PC-9 (cell line): ENCODE measurements at regions of chr16 and their contacts with region 1.

Region 1: GRCh38 chr16:50806099-50807062 is 64.5 kb downstream of the CYLD start:
- DNase-seq: peak; percentile 70 to 78
- H3K4me3 ChIP-seq: peak overlapping the region; percentile 37; the same call in 1 of the 2 replicates
- H3K27ac ChIP-seq: no peak overlapping the region
- H3K4me1 ChIP-seq: no peaks in the 10 kb centered on the region
- H3K27me3 ChIP-seq: peaks cover 10% of the 10 kb centered on the region; the same call in 1 of the 2 replicates
- CTCF ChIP-seq: peak; percentile 93

Region 2: DNA sequence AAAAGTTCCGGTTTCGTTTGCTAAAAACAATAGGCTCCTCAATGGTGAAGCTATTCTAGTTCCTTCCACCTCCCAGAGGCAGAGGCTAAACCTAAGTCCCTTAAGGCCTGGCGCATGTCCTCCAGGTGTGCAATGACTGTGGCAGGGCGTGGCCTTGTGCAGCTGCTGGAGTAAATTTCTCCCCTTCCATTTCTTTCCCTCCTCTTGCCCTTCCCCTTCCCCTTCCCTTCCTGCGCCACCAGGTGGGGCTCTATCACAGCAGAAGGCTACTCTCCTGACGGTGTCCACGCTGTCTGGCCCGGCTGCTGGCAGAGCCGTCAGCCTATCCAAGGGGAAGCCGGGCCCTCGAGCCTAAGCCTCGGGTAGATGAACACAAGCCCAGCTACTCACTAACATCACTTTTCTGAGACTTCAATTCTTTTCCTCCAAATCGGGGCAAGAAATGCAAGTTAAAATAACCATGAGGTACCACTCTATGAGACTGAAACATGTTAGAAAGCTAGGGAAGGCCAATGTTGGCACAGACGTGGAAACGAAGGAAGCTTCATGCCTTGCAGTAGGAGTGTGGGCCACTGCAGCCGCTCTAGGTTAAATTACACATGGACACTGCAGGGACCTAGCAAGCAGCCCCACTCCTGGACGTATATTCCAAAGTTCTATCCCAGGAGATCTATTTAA is 1398.4 kb before region 1 on chr16:
- CTCF ChIA-PET with region 1: no interaction called
- POLR2A ChIA-PET with region 1: no interaction called
- intact Hi-C with region 1: loop called (anchors 1 kb)
- DNase-seq: peak; percentile 46 to 59
- H3K4me3 ChIP-seq: no peak overlapping the region
- H3K27ac ChIP-seq: no peak overlapping the region
- H3K4me1 ChIP-seq: no peaks in the 10 kb centered on the region
- H3K27me3 ChIP-seq: no peaks in the 10 kb centered on the region
- CTCF ChIP-seq: peak; percentile 70

Region 3: GRCh38 chr16:50210266-50211038 is 595.9 kb before region 1 on chr16:
- CTCF ChIA-PET with region 1: interaction called, 6 read pairs
- POLR2A ChIA-PET with region 1: no interaction called
- intact Hi-C with region 1: loop called (anchors 1 kb)
- DNase-seq: peak; percentile 53 to 55
- H3K4me3 ChIP-seq: no peak overlapping the region
- H3K27ac ChIP-seq: no peak overlapping the region
- H3K4me1 ChIP-seq: no peaks in the 10 kb centered on the region
- H3K27me3 ChIP-seq: no peaks in the 10 kb centered on the region
- CTCF ChIP-seq: peak; percentile 68

Region 4: GRCh38 chr16:50360779-50361178 is 445.6 kb before region 1 on chr16:
- CTCF ChIA-PET with region 1: no interaction called
- POLR2A ChIA-PET with region 1: no interaction called
- intact Hi-C with region 1: loop called (anchors 1 kb)
- DNase-seq: no peak
- H3K4me3 ChIP-seq: no peak overlapping the region
- H3K27ac ChIP-seq: no peak overlapping the region
- H3K4me1 ChIP-seq: no peaks in the 10 kb centered on the region
- H3K27me3 ChIP-seq: no peaks in the 10 kb centered on the region
- CTCF ChIP-seq: no peak

Region 5: GRCh38 chr16:50407351-50407750 is 399.0 kb before region 1 on chr16:
- CTCF ChIA-PET with region 1: interaction called, 14 read pairs
- POLR2A ChIA-PET with region 1: no interaction called
- intact Hi-C with region 1: no loop called
- DNase-seq: no peak
- H3K4me3 ChIP-seq: no peak overlapping the region
- H3K27ac ChIP-seq: no peak overlapping the region
- H3K4me1 ChIP-seq: no peaks in the 10 kb centered on the region
- H3K27me3 ChIP-seq: no peaks in the 10 kb centered on the region
- CTCF ChIP-seq: no peak

Region 6: DNA sequence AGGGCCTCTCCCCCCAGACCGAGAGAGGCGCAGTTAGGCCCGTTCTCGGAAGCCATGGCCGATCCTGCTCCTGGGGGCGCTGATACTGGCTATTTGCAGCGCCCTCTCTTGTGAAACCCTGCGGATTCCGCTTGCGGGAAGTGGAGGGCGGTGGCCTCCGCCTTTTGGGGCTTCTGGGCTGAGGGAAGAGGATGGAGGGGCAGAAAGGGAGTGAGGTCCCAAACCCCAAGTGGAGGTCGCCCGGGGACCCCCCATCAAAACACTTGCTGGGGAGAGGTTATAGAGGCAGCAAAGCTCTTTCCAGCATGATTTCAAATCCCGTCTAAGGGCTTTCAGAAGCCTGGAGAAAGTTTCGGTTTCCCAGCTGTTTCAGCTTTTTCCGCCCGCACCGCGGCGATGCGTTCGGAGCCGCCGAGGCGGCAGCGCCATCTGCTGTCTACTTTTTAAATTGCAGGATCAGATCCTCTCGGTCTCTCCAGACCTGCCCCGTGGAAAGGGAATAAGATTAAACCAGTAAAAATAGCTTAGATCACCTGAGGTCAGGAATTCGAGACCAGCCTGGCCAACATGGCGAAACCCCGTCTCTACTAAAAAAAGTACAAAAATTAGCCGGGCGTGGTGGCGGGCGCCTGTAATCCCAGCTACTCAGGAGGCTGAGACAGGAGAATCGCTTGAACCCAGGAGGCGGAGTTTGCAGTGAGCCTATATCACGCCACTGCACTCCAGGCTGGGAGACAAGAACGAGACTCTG is 141.1 kb before region 1 on chr16:
- CTCF ChIA-PET with region 1: interaction called, 20 read pairs
- POLR2A ChIA-PET with region 1: interaction called, 4 read pairs
- intact Hi-C with region 1: loop called (anchors 1 kb)
- DNase-seq: peak; percentile 51 to 79
- H3K4me3 ChIP-seq: peak overlapping the region; percentile 45; the same call in 1 of the 2 replicates
- H3K27ac ChIP-seq: no peak overlapping the region
- H3K4me1 ChIP-seq: peaks cover 14% of the 10 kb centered on the region
- H3K27me3 ChIP-seq: no peaks in the 10 kb centered on the region
- CTCF ChIP-seq: peak; percentile 93